WTC11 (cell line): ENCODE measurements at regions of chr6 and their contacts with region 1.

Region 1: DNA sequence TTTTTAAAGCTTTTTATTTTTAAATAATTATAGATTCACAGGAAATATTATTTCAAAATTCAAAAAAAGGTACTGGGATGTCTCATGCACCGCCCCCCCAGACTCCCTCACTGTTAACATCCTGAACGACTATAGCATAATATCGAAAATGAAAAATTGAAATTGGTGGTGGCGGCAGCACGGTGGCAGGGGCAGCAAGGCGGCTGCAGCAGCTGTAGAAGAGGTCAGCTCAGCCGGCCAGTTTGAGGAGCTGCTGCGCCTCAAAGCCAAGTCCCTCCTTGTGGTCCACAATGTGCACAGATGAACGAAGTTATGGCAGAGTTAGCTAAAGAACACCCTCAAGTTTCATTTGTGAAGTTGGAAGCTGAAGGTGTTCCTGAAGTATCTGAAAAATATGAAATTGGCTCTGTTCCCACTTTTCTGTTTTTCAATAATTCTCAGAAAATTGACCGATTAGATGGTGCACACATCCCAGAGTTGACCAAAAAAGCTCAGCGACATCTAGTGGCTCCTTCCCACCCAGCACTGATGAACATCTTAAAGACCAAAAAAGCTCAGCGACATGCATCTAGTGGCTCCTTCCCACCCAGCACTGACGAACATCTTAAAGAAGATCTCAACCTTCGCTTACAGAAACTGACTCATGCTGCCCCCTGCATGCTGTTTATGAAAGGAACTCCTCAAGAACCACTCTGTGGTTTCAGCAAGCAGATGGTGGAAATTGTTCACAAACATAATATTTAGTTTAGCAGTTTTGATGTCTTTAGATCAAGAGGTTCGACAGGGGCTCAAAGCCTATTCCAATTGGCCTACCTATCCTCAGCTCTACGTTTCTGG is 100.8 kb downstream of the FAM217A start:
- DNase-seq: peak; percentile 33
- ATAC-seq: peak; percentile 99
- H3K4me3 Mint-ChIP-seq: no peak overlapping the region
- H3K27ac Mint-ChIP-seq: no peak overlapping the region
- H3K4me1 Mint-ChIP-seq: peaks cover 17% of the 10 kb centered on the region
- H3K27me3 Mint-ChIP-seq: no peaks in the 10 kb centered on the region
- CTCF ChIP-seq: peak; percentile 38

Region 2: GRCh38 chr6:3742426-3743344 is 235.4 kb before region 1 on chr6:
- CTCF ChIA-PET with region 1: interaction called, 37 read pairs
- POLR2A ChIA-PET with region 1: interaction called, 3 read pairs
- DNase-seq: peak; percentile 93
- ATAC-seq: peak; percentile 74
- H3K4me3 Mint-ChIP-seq: no peak overlapping the region; the same call in 1 of the 2 replicates
- H3K27ac Mint-ChIP-seq: no peak overlapping the region
- H3K4me1 Mint-ChIP-seq: peaks cover 41% of the 10 kb centered on the region
- H3K27me3 Mint-ChIP-seq: peaks cover 11% of the 10 kb centered on the region
- CTCF ChIP-seq: peak; percentile 95

Region 3: GRCh38 chr6:3759646-3760232 is 218.4 kb before region 1 on chr6:
- CTCF ChIA-PET with region 1: interaction called, 20 read pairs
- POLR2A ChIA-PET with region 1: no interaction called
- DNase-seq: no peak
- ATAC-seq: no peak
- H3K4me3 Mint-ChIP-seq: no peak overlapping the region
- H3K27ac Mint-ChIP-seq: no peak overlapping the region; the same call in 1 of the 2 replicates
- H3K4me1 Mint-ChIP-seq: peaks cover 26% of the 10 kb centered on the region
- H3K27me3 Mint-ChIP-seq: peaks cover 7% of the 10 kb centered on the region
- CTCF ChIP-seq: no peak

Region 4: DNA sequence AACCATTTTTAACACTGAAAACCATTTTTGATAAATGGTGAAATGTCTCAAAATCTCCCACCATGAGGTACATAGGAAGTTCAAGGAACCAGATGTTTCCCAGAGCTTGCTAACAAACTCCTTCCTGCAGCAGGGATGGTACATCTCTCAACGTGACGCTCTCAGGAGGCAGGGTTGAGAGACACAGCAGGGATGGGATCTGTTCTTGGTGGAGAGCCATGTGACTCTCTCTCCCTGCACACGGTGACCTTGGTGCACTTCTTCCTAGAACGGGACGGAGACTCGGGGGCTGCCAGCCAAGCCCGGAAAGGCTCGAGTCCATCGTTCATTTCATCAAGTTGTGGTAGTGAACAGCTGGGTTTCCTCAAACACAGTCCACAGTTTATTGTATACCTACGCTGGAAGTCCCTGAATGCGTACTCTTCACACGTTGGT is 34.7 kb before region 1 on chr6:
- CTCF ChIA-PET with region 1: interaction called, 15 read pairs
- POLR2A ChIA-PET with region 1: no interaction called
- DNase-seq: no peak
- ATAC-seq: no peak
- H3K4me3 Mint-ChIP-seq: no peak overlapping the region
- H3K27ac Mint-ChIP-seq: no peak overlapping the region
- H3K4me1 Mint-ChIP-seq: peaks cover 14% of the 10 kb centered on the region
- H3K27me3 Mint-ChIP-seq: no peaks in the 10 kb centered on the region
- CTCF ChIP-seq: no peak

Region 5: GRCh38 chr6:3965071-3965718 is 12.9 kb before region 1 on chr6:
- CTCF ChIA-PET with region 1: interaction called, 12 read pairs
- POLR2A ChIA-PET with region 1: no interaction called
- DNase-seq: no peak
- ATAC-seq: no peak
- H3K4me3 Mint-ChIP-seq: no peak overlapping the region
- H3K27ac Mint-ChIP-seq: no peak overlapping the region
- H3K4me1 Mint-ChIP-seq: no peaks in the 10 kb centered on the region
- H3K27me3 Mint-ChIP-seq: no peaks in the 10 kb centered on the region; the same call in 1 of the 2 replicates
- CTCF ChIP-seq: no peak

Region 6: GRCh38 chr6:4021133-4021853 is 43.2 kb after region 1 on chr6:
- CTCF ChIA-PET with region 1: interaction called, 12 read pairs
- POLR2A ChIA-PET with region 1: interaction called, 3 read pairs
- DNase-seq: peak; percentile 90
- ATAC-seq: peak; percentile 83
- H3K4me3 Mint-ChIP-seq: peak overlapping the region; percentile 87
- H3K27ac Mint-ChIP-seq: peak overlapping the region; percentile 98
- H3K4me1 Mint-ChIP-seq: peaks cover 54% of the 10 kb centered on the region
- H3K27me3 Mint-ChIP-seq: no peaks in the 10 kb centered on the region
- CTCF ChIP-seq: no peak